IMR-90 (cell line): ENCODE measurements at regions of chr2 and their contacts with region 1.

Region 1: GRCh38 chr2:20091305-20091991 is 40.0 kb upstream of the LAPTM4A start:
- DNase-seq: peak; percentile 97
- ATAC-seq: peak; percentile 68
- H3K4me3 ChIP-seq: peak overlapping the region; percentile 2; the same call in 1 of the 2 replicates
- H3K27ac ChIP-seq: peak overlapping the region; percentile 95
- H3K4me1 ChIP-seq: peaks cover 40% of the 10 kb centered on the region
- H3K27me3 ChIP-seq: no peaks in the 10 kb centered on the region
- CTCF ChIP-seq: no peak
- POLR2A ChIP-seq: peak; percentile 55
- RAD21 ChIP-seq: peak; percentile 29; the same call in 1 of the 2 replicates

Region 2: DNA sequence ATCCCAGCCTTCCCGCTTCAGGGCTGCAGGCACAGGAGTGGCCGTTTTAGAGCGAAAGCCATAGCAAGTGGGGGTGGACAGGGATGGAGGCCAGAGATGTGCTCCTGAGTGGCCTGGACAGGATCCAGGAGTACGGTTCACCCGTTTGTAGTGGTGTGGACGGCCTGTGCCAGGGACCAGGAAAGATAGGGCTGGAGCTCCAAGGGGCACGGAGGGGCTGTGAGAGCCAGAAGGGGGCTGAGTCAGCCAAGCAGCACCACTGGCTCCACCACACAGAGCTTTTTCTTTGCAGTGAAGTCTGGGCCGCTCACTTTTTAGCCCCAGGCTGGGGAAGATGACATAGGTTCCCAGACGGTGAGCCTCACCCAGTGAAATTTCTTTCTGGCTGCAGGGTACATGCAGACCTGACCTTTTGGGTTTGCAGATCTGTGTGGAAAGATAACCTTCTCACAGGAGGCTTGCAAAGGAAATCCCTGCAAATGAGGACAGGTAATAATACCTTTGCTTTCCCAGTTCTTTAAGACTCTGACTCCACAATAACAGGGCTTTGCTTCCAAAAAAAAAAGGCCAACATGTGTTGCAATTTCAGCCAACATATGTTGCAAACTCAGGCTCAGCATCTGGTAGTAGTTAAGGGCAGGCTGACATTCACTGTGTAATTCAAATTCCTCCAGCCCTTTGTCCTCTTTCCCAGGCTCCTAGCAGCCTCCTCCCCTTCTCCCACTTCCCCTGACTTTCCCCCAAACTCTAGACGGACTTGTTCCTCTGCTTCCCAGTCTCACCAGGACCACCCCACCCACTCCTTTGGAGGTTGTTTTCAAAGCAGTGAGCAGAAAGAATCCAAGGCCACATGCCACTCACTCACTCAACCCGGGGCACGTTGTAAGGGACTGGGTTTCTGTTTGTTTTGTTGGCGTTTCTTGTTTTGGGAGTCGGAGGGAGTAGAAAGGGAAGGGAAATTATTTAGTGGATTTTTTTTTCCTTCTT is 19.8 kb before region 1 on chr2:
- CTCF ChIA-PET with region 1: no interaction called
- POLR2A ChIA-PET with region 1: no interaction called
- dilution Hi-C with region 1: no loop called
- in situ Hi-C with region 1: no loop called
- intact Hi-C with region 1: loop called (anchors 1 kb)
- DNase-seq: peak; percentile 98
- ATAC-seq: peak; percentile 65
- H3K4me3 ChIP-seq: peak overlapping the region; percentile 5
- H3K27ac ChIP-seq: peak overlapping the region; percentile 99
- H3K4me1 ChIP-seq: peaks cover 27% of the 10 kb centered on the region
- H3K27me3 ChIP-seq: no peaks in the 10 kb centered on the region
- CTCF ChIP-seq: no peak
- POLR2A ChIP-seq: peak; percentile 58
- RAD21 ChIP-seq: no peak

Region 3: GRCh38 chr2:20145497-20146193 is 54.2 kb after region 1 on chr2:
- CTCF ChIA-PET with region 1: no interaction called
- POLR2A ChIA-PET with region 1: no interaction called
- dilution Hi-C with region 1: no loop called
- in situ Hi-C with region 1: no loop called
- intact Hi-C with region 1: no loop called
- DNase-seq: no peak
- ATAC-seq: no peak
- H3K4me3 ChIP-seq: no peak overlapping the region
- H3K27ac ChIP-seq: no peak overlapping the region
- H3K4me1 ChIP-seq: peaks cover 15% of the 10 kb centered on the region
- H3K27me3 ChIP-seq: no peaks in the 10 kb centered on the region
- CTCF ChIP-seq: no peak
- POLR2A ChIP-seq: no peak
- RAD21 ChIP-seq: no peak